RWPE1 (cell line): ENCODE measurements at regions of chr17 and their contacts with region 1.

Region 1: GRCh38 chr17:10646392-10646990 is 10.6 kb downstream of the MYH3 start:
- DNase-seq: peak; percentile 44
- H3K27ac ChIP-seq: no peak overlapping the region
- CTCF ChIP-seq: peak; percentile 84

Region 2: GRCh38 chr17:10631048-10631700 is 15.3 kb before region 1 on chr17:
- CTCF ChIA-PET with region 1: interaction called, 13 read pairs
- POLR2A ChIA-PET with region 1: no interaction called
- DNase-seq: peak; percentile 33
- H3K27ac ChIP-seq: no peak overlapping the region
- CTCF ChIP-seq: peak; percentile 90